Mammary epithelial cell (primary cell): ENCODE measurements at regions of chr5 and their contacts with region 1.

Region 1: DNA sequence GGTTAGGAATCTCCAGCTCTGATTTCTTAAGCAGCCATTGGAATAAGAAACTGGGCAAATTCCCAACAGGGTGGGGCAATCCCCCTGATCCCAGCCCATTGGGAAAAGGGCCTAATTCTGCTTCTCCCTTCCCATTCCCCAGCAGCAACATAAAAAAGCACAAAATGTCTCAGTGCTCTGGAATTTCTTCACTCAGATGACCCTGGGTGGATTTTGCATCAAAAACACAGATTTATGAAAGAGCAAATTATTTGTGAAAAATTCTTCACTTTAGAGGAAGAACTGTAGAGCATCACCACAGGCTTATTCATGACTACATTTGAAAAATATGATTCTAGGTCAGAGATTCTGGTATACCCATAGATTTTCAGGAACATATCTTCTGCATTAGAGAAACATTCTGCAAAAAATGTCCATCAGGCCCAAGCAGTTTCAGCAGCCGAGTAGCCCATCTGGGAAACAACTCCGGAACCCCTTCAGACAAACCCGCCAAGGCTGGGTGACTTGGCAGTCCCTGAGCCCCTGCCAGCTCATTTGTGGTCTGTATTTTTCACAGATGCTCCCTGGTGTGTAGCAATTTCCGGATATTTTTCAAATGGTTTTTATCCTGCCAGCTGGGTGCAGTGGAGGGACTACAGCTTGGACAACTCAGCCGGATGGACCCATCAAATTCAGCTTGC is 102.1 kb upstream of the RANBP3L start:
- DNase-seq: no peak
- H3K4me3 ChIP-seq: no peak overlapping the region
- H3K27ac ChIP-seq: no peak overlapping the region
- H3K4me1 ChIP-seq: no peaks in the 10 kb centered on the region
- H3K27me3 ChIP-seq: no peaks in the 10 kb centered on the region
- CTCF ChIP-seq: no peak

Region 2: GRCh38 chr5:36646507-36647023 is 242.8 kb after region 1 on chr5:
- CTCF ChIA-PET with region 1: no interaction called
- dilution Hi-C with region 1: no loop called
- in situ Hi-C with region 1: no loop called
- intact Hi-C with region 1: no loop called
- DNase-seq: no peak
- H3K4me3 ChIP-seq: no peak overlapping the region
- H3K27ac ChIP-seq: no peak overlapping the region
- H3K4me1 ChIP-seq: no peaks in the 10 kb centered on the region
- H3K27me3 ChIP-seq: no peaks in the 10 kb centered on the region
- CTCF ChIP-seq: no peak

Region 3: DNA sequence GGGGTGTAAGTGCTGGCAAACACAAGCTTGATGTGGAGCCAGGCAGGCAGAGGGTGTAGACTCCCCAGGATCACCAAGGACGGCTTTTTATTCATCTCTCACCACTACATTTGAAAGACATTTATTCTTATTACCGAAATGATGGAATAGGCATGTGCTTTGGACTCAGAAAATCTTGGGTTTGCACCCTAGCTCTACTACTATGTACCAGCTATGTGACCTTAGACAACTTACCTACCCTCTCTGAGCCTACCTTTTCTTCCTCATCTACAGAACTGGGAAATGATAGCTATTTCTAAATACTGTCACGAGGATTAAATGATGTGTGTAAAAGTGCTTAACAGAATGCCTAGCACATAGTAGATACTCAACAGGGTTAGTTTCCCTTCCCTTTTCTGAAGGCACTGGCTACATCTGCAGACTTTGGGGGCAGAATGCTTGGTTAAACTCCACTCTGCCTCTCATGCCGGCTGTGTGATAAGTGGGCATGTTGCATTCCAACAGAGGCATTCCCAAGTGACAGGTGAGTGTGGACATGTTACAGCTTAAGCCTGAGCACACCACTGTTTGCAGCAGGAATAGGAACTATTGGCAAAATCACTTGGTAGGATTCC is 297.4 kb after region 1 on chr5:
- CTCF ChIA-PET with region 1: no interaction called
- dilution Hi-C with region 1: loop called (anchors 10 kb)
- in situ Hi-C with region 1: no loop called
- intact Hi-C with region 1: no loop called
- DNase-seq: no peak
- H3K4me3 ChIP-seq: no peak overlapping the region
- H3K27ac ChIP-seq: no peak overlapping the region
- H3K4me1 ChIP-seq: no peaks in the 10 kb centered on the region
- H3K27me3 ChIP-seq: no peaks in the 10 kb centered on the region
- CTCF ChIP-seq: no peak